PC-3 (cell line): ENCODE measurements at regions of chr9 and their contacts with region 1.

Region 1: DNA sequence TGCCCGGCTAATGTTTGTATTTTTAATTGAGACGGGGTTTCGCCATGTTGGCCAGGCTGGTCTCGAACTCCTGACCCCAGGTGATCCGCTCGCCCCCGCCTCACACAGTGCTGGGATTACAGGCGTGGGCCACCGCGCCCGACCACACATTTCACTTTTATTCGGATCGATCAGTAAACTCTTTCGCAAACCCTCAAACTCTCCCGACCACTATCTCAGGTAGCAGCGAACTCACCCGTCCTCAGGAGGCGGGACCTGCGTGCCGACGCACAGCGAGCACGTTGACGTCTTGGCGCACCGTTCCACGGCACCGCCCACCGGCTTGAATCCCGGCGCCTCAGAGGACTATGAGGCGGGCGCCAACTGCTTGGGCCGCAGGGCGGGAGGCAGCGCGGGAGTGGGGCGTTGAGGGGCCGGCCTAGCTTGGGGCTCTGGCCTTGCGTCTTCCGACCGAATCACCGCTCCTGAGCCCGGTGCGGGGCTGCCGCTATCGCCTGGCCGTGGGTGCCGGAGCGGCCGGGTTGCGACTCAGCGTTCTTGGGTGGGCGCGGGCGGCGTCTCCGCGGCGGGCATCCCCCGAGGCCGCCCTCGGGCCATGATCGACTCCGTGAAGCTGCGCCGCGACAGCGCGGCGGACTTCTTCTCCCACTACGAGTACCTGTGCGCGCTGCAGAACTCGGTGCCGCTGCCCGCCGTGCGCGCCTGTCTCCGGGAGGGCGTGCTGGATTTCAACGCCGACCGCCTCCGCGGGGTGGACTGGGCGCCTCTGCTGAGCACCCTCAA is at the start of gene CEP78:
- DNase-seq: peak; percentile 90
- ATAC-seq: peak; percentile 93
- H3K4me3 ChIP-seq: peak within 1 kb of the TSS; percentile 98
- H3K27ac ChIP-seq: 0 out of 2 replicates have a peak within 1 kb of the TSS, but pooled peaks have one; percentile 23
- H3K4me1 ChIP-seq: peaks cover 4% of the 10 kb centered on the region; the same call in 1 of the 2 replicates
- H3K27me3 ChIP-seq: no peaks in the 10 kb centered on the region
- CTCF ChIP-seq: no peak
- total RNA-seq, gene CEP78: 35.2 and 52.5 TPM in 2 replicates

Region 2: GRCh38 chr9:78169125-78169524 is 66.8 kb before region 1 on chr9:
- CTCF ChIA-PET with region 1: no interaction called
- POLR2A ChIA-PET with region 1: no interaction called
- intact Hi-C with region 1: loop called (anchors 2 kb)
- DNase-seq: no peak
- ATAC-seq: no peak
- H3K4me3 ChIP-seq: no peak overlapping the region
- H3K27ac ChIP-seq: no peak overlapping the region
- H3K4me1 ChIP-seq: 0 out of 2 replicates have a peak, but pooled peaks cover 6% of the 10 kb centered on the region
- H3K27me3 ChIP-seq: peaks cover 18% of the 10 kb centered on the region
- CTCF ChIP-seq: no peak

Region 3: DNA sequence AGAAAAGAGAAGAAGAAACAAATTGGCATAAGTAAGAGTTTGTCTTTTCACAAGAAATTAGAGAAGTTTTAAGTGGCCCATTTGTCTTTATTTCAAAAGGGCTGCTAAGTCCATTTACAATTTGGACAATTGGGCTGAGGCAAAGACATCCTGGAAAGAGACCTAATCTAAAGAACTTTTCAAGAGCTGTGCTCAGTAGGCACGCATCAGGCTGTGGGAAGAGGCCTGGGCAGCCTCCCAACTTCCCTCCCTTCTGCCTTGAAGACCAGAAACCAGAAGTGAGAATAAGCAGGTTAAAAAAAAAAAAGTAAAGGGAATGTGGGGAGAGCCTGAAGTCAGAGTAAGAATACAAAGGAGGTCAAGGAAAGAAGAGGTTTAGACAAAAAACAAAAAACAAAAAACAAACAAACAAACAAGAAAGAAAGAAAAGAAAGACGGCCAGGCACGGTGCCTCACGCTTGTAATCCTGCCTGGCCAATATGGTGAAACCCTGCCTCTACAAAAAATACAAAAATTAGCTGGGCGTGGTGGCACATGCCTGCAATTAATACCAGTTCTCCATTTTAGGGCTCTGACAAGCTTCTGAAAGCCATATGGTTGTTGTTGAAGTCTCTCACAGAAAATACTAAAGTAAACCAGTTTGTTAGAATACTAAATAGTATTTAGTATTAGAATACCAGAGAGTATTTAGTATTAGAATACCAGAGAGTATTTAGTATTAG is 48.0 kb before region 1 on chr9:
- CTCF ChIA-PET with region 1: no interaction called
- POLR2A ChIA-PET with region 1: no interaction called
- intact Hi-C with region 1: no loop called
- DNase-seq: no peak
- ATAC-seq: no peak
- H3K4me3 ChIP-seq: no peak overlapping the region
- H3K27ac ChIP-seq: no peak overlapping the region
- H3K4me1 ChIP-seq: no peaks in the 10 kb centered on the region
- H3K27me3 ChIP-seq: no peaks in the 10 kb centered on the region
- CTCF ChIP-seq: no peak

Region 4: DNA sequence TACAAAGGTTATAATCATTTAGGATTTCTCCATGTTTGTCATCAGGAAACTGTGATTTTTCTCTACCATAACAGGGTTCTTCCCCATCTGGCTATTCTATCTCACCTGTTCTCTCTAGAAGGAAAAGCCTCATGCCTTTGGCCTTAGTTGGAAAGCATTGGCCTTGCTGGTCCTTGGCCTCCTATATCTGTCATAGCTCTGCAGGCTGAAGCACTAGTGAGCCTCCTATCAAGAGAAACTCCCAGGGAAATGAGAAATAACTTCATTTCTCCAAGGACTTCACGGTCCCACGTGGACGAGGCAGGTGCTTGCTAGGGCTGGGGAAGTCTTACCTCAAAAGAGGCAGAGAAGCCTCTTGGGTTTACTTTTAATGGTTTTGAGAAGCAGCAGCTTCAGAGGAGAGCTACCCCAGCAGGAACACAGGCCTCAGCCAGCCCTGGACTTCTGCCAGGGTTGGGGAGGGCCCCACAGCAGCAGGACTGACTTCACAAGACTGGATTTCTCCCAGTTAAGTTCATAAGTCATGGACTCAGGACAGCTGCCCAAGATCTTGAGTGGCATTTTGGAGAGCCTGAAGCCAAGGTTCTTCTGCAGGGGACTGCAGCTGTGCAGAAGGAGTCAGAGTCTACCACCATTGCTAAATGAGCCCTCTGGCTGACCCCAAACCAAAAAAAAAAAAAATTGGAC is 45.2 kb after region 1 on chr9:
- CTCF ChIA-PET with region 1: no interaction called
- POLR2A ChIA-PET with region 1: no interaction called
- intact Hi-C with region 1: no loop called
- DNase-seq: no peak
- ATAC-seq: no peak
- H3K4me3 ChIP-seq: no peak overlapping the region
- H3K27ac ChIP-seq: no peak overlapping the region
- H3K4me1 ChIP-seq: no peaks in the 10 kb centered on the region
- H3K27me3 ChIP-seq: no peaks in the 10 kb centered on the region
- CTCF ChIP-seq: no peak

Region 5: GRCh38 chr9:78351816-78352215 is 115.9 kb after region 1 on chr9:
- CTCF ChIA-PET with region 1: no interaction called
- POLR2A ChIA-PET with region 1: no interaction called
- intact Hi-C with region 1: no loop called
- DNase-seq: no peak
- ATAC-seq: no peak
- H3K4me3 ChIP-seq: no peak overlapping the region
- H3K27ac ChIP-seq: no peak overlapping the region
- H3K4me1 ChIP-seq: no peaks in the 10 kb centered on the region; the same call in 1 of the 2 replicates
- H3K27me3 ChIP-seq: no peaks in the 10 kb centered on the region
- CTCF ChIP-seq: no peak